B cell (primary cell): ENCODE measurements at regions of chrX and their contacts with region 1.

Region 1: DNA sequence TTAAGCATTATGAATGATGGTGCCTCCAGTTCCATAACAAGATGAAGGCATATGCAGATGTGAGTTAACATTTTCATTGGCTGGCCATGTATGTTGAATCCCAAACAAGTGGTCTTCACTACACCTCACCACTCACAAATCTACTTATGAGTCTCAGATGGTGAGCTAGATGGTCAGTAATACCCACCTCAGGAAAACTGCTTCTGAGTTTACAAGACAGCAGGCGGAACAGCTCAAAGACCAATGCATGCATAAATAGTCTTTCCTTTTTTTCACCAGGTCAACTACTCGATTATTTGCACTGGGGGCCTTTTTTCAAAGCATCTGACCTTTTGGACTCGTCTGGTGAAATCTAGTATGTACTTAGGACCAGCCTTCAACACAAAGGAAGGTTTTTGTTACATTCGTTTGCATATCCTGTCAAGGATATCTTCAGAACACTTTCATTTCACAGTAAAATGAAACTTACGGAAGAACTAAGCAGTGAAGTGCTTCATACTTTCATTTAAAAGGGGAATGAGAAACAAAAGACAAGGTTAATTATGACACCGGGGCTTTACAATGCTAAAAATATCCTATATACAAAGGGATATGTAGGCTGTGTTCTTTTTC is 23.1 kb upstream of the TLR7 start:
- DNase-seq: peak; percentile 32
- ATAC-seq: peak; percentile 58
- H3K4me3 ChIP-seq: peak overlapping the region in 4 of 5 experiments; percentile 19 to 58 (median 32)
- H3K4me3 Mint-ChIP-seq: peak overlapping the region; percentile 86
- H3K27ac ChIP-seq: peak overlapping the region; percentile 75 to 84
- H3K27ac Mint-ChIP-seq: peak overlapping the region; percentile 91
- H3K4me1 ChIP-seq: peaks cover 17 to 19% of the 10 kb centered on the region in 2 donors
- H3K4me1 Mint-ChIP-seq: peaks cover 12% of the 10 kb centered on the region
- H3K27me3 ChIP-seq: no peaks in the 10 kb centered on the region
- H3K27me3 Mint-ChIP-seq: no peaks in the 10 kb centered on the region
- CTCF ChIP-seq: no peak

Region 2: DNA sequence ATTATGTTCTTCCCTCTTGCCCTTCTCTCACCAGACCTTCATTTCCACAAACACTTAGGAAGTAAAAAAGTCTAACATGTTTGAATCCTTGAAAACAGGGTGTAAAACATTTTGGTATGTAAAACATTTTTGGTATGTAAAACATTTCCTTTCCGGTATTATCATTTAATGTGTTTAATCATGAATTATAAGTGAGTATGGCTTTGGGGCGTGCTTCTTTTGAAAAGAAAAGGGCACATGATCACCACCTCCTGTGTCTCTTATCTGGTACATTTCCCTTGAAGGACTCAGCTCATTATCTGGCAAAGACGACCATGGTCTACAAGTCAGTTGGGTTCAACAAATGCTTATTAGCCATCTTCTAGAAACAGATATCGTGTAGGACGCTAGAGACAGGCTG is 421.9 kb before region 1 on chrX:
- CTCF ChIA-PET with region 1: no interaction called
- POLR2A ChIA-PET with region 1: no interaction called
- intact Hi-C with region 1: no loop called
- DNase-seq: no peak
- ATAC-seq: no peak
- H3K4me3 ChIP-seq: no peak overlapping the region
- H3K4me3 Mint-ChIP-seq: no peak overlapping the region
- H3K27ac ChIP-seq: no peak overlapping the region
- H3K27ac Mint-ChIP-seq: no peak overlapping the region
- H3K4me1 ChIP-seq: no peaks in the 10 kb centered on the region
- H3K4me1 Mint-ChIP-seq: no peaks in the 10 kb centered on the region
- H3K27me3 ChIP-seq: no peaks in the 10 kb centered on the region
- H3K27me3 Mint-ChIP-seq: no peaks in the 10 kb centered on the region
- CTCF ChIP-seq: no peak

Region 3: DNA sequence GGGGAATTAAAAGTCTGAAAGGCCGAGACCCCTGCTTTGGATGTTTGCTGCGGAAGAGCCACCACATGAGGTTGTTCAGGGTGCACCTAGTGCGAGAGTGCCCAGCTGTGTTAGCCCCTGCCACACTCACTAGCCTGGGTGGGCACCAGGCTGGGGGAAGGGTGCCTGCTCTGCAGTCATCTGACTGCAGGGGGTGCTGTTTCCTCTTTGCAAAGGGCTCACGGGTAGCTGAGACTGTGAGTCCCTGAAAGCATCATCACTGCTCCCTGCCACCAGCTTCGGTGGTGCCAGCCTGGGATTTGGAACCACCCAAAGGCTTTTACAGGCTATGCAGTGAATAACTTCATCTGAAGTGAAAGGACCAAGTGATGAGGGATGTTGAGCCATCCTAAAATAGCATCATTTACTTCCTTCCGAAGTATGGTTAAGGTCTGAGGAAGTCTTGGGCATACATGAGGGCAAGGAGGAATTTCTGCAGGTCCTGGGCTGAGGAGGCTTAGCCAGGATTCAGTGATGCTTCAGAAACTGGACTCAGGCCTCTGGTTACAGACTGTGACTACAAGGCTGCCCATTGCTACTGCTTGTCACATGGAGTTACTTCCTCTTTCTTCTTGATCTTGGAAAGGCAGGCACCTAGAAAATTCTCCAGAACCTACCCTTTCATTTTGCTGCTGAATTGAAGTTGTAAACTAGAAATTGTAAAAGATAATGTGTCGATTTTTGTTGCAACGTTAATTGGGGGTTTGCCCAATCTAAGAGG is 345.8 kb before region 1 on chrX:
- CTCF ChIA-PET with region 1: no interaction called
- POLR2A ChIA-PET with region 1: no interaction called
- intact Hi-C with region 1: no loop called
- DNase-seq: peak; percentile 17
- ATAC-seq: peak; percentile 24
- H3K4me3 ChIP-seq: no peak overlapping the region
- H3K4me3 Mint-ChIP-seq: no peak overlapping the region
- H3K27ac ChIP-seq: no peak overlapping the region
- H3K27ac Mint-ChIP-seq: no peak overlapping the region
- H3K4me1 ChIP-seq: peaks cover 15 to 16% of the 10 kb centered on the region in 2 donors
- H3K4me1 Mint-ChIP-seq: peaks cover 15% of the 10 kb centered on the region
- H3K27me3 ChIP-seq: no peaks in the 10 kb centered on the region
- H3K27me3 Mint-ChIP-seq: no peaks in the 10 kb centered on the region
- CTCF ChIP-seq: no peak

Region 4: GRCh38 chrX:12868747-12869146 is 25.0 kb after region 1 on chrX:
- CTCF ChIA-PET with region 1: interaction called, 3 read pairs
- POLR2A ChIA-PET with region 1: no interaction called
- intact Hi-C with region 1: loop called (anchors 2 kb)
- DNase-seq: no peak
- ATAC-seq: peak; percentile 19
- H3K4me3 ChIP-seq: peak overlapping the region in 4 of 5 experiments; percentile 43 to 74 (median 58)
- H3K4me3 Mint-ChIP-seq: peak overlapping the region; percentile 92
- H3K27ac ChIP-seq: peak overlapping the region; percentile 56 to 80
- H3K27ac Mint-ChIP-seq: peak overlapping the region; percentile 93
- H3K4me1 ChIP-seq: peaks cover 45 to 71% of the 10 kb centered on the region in 2 donors
- H3K4me1 Mint-ChIP-seq: peaks cover 66% of the 10 kb centered on the region
- H3K27me3 ChIP-seq: no peaks in the 10 kb centered on the region
- H3K27me3 Mint-ChIP-seq: no peaks in the 10 kb centered on the region
- CTCF ChIP-seq: no peak